ENCODE measurements at regions of chr10 and their contacts with region 1.

Region 1: GRCh38 chr10:73644015-73644743 is 2.9 kb upstream of the MYOZ1 start:
- DNase-seq: peak in 31 of 35 experiments; percentile 10 to 79 (median 42)
- ATAC-seq: peak; percentile 62 to 74 (median 70)
- H3K4me3 ChIP-seq: no peak overlapping the region
- H3K4me3 Mint-ChIP-seq: no peak overlapping the region
- H3K27ac ChIP-seq: no peak overlapping the region
- H3K27ac Mint-ChIP-seq: no peak overlapping the region
- H3K4me1 ChIP-seq: peaks cover 0 to 19% of the 10 kb centered on the region in 2 experiments
- H3K4me1 Mint-ChIP-seq: peaks cover 4 to 10% (median 4%) of the 10 kb centered on the region in 3 donors
- H3K27me3 ChIP-seq: peaks cover 0 to 40% of the 10 kb centered on the region in 2 experiments
- H3K27me3 Mint-ChIP-seq: peaks cover 8 to 9% of the 10 kb centered on the region in 2 donors

Region 2: GRCh38 chr10:72058989-72059842 is 1585.0 kb before region 1 on chr10:
- CTCF ChIA-PET with region 1: no interaction called
- POLR2A ChIA-PET with region 1: interaction called in 1 of 2 experiments, 13 read pairs
- DNase-seq: peak in 2 of 35 experiments; percentile 49 to 61
- ATAC-seq: peak; percentile 12 to 47 (median 28)
- H3K4me3 ChIP-seq: no peak overlapping the region
- H3K4me3 Mint-ChIP-seq: peak overlapping the region in 1 of 3 donors; percentile 28
- H3K27ac ChIP-seq: no peak overlapping the region
- H3K27ac Mint-ChIP-seq: peak overlapping the region; percentile 77 to 84
- H3K4me1 ChIP-seq: peaks cover 0 to 18% of the 10 kb centered on the region in 2 experiments
- H3K4me1 Mint-ChIP-seq: peaks cover 37 to 48% (median 47%) of the 10 kb centered on the region in 3 donors
- H3K27me3 ChIP-seq: no peaks in the 10 kb centered on the region
- H3K27me3 Mint-ChIP-seq: no peaks in the 10 kb centered on the region

Region 3: DNA sequence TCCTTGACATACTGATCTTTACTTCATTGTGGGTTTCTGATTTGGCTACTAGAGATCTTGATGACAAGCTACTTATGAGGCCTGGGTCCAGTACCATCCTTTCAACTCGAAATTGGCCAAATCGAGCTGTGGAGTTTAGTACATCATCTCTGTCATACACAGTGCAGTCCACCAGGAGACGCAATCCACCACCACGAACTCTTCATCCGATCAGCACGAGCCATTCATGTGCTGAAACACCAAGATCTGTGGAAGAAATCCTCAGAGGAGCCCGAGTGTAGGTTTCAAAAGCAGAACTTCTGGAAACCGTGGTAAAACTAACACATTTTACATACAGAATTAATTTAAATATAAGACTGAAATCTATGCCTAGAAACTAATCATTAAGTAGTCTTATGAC is 411.3 kb before region 1 on chr10:
- CTCF ChIA-PET with region 1: no interaction called
- POLR2A ChIA-PET with region 1: no interaction called
- DNase-seq: peak in 1 of 35 experiments; percentile 16
- ATAC-seq: no peak
- H3K4me3 ChIP-seq: no peak overlapping the region
- H3K4me3 Mint-ChIP-seq: no peak overlapping the region
- H3K27ac ChIP-seq: no peak overlapping the region
- H3K27ac Mint-ChIP-seq: no peak overlapping the region
- H3K4me1 ChIP-seq: no peaks in the 10 kb centered on the region
- H3K4me1 Mint-ChIP-seq: no peaks in the 10 kb centered on the region
- H3K27me3 ChIP-seq: no peaks in the 10 kb centered on the region
- H3K27me3 Mint-ChIP-seq: no peaks in the 10 kb centered on the region

Region 4: GRCh38 chr10:73529089-73529832 is 114.9 kb before region 1 on chr10:
- CTCF ChIA-PET with region 1: interaction called, 26 to 53 read pairs
- POLR2A ChIA-PET with region 1: interaction called, 5 to 6 read pairs
- DNase-seq: peak; percentile 1 to 80 (median 29)
- ATAC-seq: peak; percentile 75 to 87 (median 82)
- H3K4me3 ChIP-seq: no peak overlapping the region
- H3K4me3 Mint-ChIP-seq: no peak overlapping the region
- H3K27ac ChIP-seq: no peak overlapping the region
- H3K27ac Mint-ChIP-seq: no peak overlapping the region
- H3K4me1 ChIP-seq: no peaks in the 10 kb centered on the region
- H3K4me1 Mint-ChIP-seq: no peaks in the 10 kb centered on the region
- H3K27me3 ChIP-seq: no peaks in the 10 kb centered on the region
- H3K27me3 Mint-ChIP-seq: no peaks in the 10 kb centered on the region

Region 5: DNA sequence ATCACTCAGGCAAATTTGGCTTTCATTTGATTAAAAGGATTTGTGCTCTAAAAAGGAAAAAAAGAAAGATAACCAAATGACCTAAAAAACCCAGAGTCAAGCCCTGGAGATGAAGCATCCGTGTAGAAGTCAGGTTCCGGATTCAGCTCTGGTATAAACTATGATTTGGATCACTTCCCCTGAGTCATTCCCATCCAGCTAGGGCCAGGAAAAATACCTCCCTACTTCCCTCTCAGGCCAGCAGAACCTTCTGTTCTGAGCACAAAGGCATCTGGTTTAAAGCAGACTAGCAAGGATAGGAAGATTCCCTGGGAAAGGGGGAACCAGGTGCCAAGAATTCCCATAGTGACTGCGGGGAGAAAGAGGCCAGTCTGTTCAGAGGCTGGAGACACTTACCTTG is 192.9 kb after region 1 on chr10:
- CTCF ChIA-PET with region 1: no interaction called
- POLR2A ChIA-PET with region 1: no interaction called
- DNase-seq: no peak
- ATAC-seq: no peak
- H3K4me3 ChIP-seq: no peak overlapping the region
- H3K4me3 Mint-ChIP-seq: no peak overlapping the region
- H3K27ac ChIP-seq: no peak overlapping the region
- H3K27ac Mint-ChIP-seq: no peak overlapping the region
- H3K4me1 ChIP-seq: no peaks in the 10 kb centered on the region
- H3K4me1 Mint-ChIP-seq: no peaks in the 10 kb centered on the region
- H3K27me3 ChIP-seq: no peaks in the 10 kb centered on the region
- H3K27me3 Mint-ChIP-seq: no peaks in the 10 kb centered on the region

Measured in T-cell (primary cell).